ENCODE measurements at regions of chr12 and their contacts with region 1.

Region 1: DNA sequence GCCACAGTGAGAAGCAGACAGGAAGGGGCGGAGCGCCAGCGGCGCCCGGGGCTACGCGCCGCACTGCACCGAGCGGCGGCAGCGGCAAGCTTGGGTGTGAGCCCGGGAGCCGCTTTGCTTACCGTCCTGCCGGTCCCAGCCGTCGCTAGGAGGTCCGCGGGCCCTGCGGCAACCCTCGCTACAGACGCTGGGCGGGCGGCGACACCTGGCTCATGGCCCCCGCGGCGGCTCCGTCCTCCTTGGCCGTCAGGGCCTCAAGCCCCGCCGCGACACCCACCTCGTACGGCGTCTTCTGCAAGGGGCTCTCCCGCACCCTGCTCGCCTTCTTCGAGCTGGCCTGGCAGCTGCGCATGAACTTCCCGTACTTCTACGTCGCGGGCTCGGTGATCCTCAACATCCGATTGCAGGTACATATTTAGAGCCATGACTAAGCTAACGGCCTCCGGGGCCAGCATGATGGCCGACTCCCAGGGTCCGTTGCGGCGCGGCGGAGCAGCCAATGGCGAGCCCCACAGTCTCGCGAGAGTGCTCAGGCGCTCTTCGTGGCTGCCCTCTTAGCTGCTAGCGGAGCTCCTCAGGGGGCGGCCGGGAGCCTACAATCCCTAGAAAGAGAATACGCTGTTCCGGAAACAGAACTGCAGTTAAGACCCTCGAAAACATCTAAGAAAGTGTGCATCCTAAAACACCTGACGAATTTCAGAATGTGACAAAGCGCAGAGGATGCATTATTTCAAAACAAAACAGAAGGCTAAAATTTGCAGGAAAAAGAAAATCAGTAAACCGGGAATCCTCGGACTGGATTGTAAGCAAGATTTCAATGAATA is at the start of gene SMIM10L1:
- DNase-seq: peak; percentile 94
- H3K4me3 Mint-ChIP-seq: peak within 1 kb of the TSS; percentile 97
- H3K27ac Mint-ChIP-seq: peak within 1 kb of the TSS; percentile 99
- H3K4me1 Mint-ChIP-seq: peaks cover 38% of the 10 kb centered on the region
- H3K27me3 Mint-ChIP-seq: no peaks in the 10 kb centered on the region
- total RNA-seq, gene SMIM10L1: 5.0 to 5.6 TPM

Region 2: GRCh38 chr12:10304161-10304574 is 867.2 kb before region 1 on chr12:
- CTCF ChIA-PET with region 1: no interaction called
- intact Hi-C with region 1: loop called (anchors 5 kb)
- DNase-seq: peak; percentile 59
- H3K4me3 Mint-ChIP-seq: no peak overlapping the region
- H3K27ac Mint-ChIP-seq: no peak overlapping the region
- H3K4me1 Mint-ChIP-seq: peaks cover 49% of the 10 kb centered on the region
- H3K27me3 Mint-ChIP-seq: peaks cover 5% of the 10 kb centered on the region

Region 3: GRCh38 chr12:10613349-10614055 is 557.9 kb before region 1 on chr12 and contains the start of gene MAGOHB:
- CTCF ChIA-PET with region 1: interaction called, 3 read pairs
- intact Hi-C with region 1: loop called (anchors 1 kb)
- DNase-seq: peak; percentile 99
- H3K4me3 Mint-ChIP-seq: peak within 1 kb of the TSS; percentile 99
- H3K27ac Mint-ChIP-seq: peak within 1 kb of the TSS; percentile 99
- H3K4me1 Mint-ChIP-seq: peaks cover 30% of the 10 kb centered on the region
- H3K27me3 Mint-ChIP-seq: peaks cover 2% of the 10 kb centered on the region
- total RNA-seq, gene MAGOHB: 58.8 to 61.1 TPM

Region 4: DNA sequence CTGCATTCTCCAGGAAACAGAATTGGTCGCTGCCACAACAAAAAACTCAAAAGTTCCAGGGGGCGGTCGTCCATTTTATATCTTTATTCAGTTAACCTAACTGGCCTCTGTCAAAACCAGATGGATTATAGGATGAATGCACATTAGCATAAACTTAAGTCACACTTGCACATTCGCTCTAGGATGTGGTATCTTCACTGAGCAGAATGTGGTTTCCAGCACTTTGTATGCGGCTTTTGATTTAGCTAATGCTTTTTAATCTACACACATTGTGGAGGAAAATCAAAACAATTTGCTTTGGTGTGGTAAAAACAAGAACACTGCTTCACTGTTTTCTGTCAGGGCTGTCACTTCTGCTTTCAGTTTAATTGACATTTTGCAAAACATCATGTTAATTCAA is 189.1 kb before region 1 on chr12:
- CTCF ChIA-PET with region 1: no interaction called
- intact Hi-C with region 1: loop called (anchors 1 kb)
- DNase-seq: peak; percentile 74
- H3K4me3 Mint-ChIP-seq: no peak overlapping the region
- H3K27ac Mint-ChIP-seq: no peak overlapping the region
- H3K4me1 Mint-ChIP-seq: peaks cover 19% of the 10 kb centered on the region
- H3K27me3 Mint-ChIP-seq: peaks cover 9% of the 10 kb centered on the region

Region 5: GRCh38 chr12:12070674-12071656 is 899.6 kb after region 1 on chr12 and contains the start of gene BCL2L14:
- CTCF ChIA-PET with region 1: no interaction called
- intact Hi-C with region 1: loop called (anchors 1 kb)
- DNase-seq: peak; percentile 52
- H3K4me3 Mint-ChIP-seq: peak within 1 kb of the TSS; percentile 85
- H3K27ac Mint-ChIP-seq: peak within 1 kb of the TSS; percentile 90
- H3K4me1 Mint-ChIP-seq: peaks cover 36% of the 10 kb centered on the region
- H3K27me3 Mint-ChIP-seq: no peaks in the 10 kb centered on the region
- total RNA-seq, gene BCL2L14: 19.4 to 21.8 TPM